ENCODE measurements at regions of chr5 and their contacts with region 1.

Region 1: GRCh38 chr5:140432916-140433315 is 31.3 kb downstream of the ANKHD1 start:
- ATAC-seq: no peak
- H3K4me3 ChIP-seq: no peak overlapping the region
- H3K27ac ChIP-seq: no peak overlapping the region
- H3K4me1 ChIP-seq: no peaks in the 10 kb centered on the region

Region 2: GRCh38 chr5:140509898-140510297 is 77.0 kb after region 1 on chr5:
- in situ Hi-C with region 1: no loop called
- ATAC-seq: no peak
- H3K4me3 ChIP-seq: no peak overlapping the region
- H3K27ac ChIP-seq: no peak overlapping the region
- H3K4me1 ChIP-seq: no peaks in the 10 kb centered on the region

Region 3: DNA sequence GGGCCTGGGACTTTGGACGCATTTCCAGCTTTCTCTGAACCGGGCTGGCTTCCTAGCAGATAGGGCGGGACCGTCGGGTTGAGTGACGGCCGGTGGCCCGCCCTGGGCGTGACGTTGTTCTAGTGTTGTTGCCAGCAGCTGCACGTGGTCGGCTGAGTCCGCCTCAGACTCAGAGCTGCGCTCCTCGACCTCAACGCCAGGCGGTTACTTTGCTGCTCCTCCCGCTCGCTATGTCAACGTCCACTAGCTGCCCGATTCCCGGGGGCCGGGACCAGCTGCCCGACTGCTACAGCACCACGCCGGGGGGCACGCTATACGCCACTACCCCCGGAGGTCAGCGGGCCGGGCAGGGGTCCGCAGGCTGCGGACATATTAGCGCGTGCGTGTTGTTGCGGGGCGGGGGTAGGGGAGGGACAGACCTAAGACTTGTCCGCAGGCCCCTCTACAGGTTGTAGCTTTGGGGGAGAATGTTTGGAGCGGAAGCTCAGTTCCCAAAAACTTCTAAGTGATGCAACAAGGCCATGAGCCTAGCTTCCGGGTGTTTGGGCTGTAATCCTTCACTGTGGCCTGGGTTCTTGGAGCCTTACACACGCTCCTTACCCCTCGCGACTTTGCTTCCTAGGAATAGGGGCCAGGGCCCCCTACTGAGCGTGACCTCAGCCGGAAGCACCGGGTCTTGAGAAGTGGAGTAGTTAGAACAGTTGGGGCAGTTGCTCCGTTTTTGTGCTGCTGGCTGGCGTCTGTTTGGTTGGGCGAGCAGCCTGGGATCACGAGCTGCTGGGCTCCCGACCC is 114.8 kb after region 1 on chr5 and contains the start of gene EIF4EBP3:
- in situ Hi-C with region 1: loop called in 1 of 9 experiments (anchors 25 kb)
- ATAC-seq: peak; percentile 76 to 96 (median 94)
- H3K4me3 ChIP-seq: peak within 1 kb of the TSS; percentile 10 to 33 (median 29)
- H3K27ac ChIP-seq: peak within 1 kb of the TSS; percentile 43 to 73
- H3K4me1 ChIP-seq: peaks cover 12 to 16% of the 10 kb centered on the region in 2 donors
- total RNA-seq, gene EIF4EBP3: 1.2 to 7.8 (median 4.3) TPM